Gastrocnemius medialis (tissue), 4 donors: ENCODE measurements at regions of chr13 and their contacts with region 1.

Region 1: DNA sequence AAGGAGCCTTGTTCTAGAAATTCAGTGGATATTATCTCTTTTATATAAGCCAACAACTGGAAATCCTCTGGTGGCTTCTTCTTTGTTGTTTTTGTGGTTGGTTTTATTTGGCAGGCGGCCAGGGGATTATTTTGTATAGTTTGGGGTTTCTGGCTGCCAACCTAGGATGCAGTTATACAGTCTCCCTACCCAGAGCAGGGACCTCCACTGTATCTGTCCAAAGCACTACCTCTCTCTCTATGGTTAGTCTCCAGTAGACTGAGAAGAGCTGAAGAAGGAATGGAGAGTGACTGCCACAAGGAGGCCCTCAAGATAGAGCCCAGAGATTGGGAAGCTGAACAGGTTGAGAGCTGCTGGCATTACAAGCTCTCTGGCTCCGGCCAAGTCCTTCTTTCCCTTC is 80.2 kb downstream of the ZAR1L start:
- DNase-seq: no peak
- ATAC-seq: no peak
- H3K4me3 ChIP-seq: no peak overlapping the region
- H3K27ac ChIP-seq: no peak overlapping the region
- H3K4me1 ChIP-seq: no peaks in the 10 kb centered on the region
- H3K27me3 ChIP-seq: no peaks in the 10 kb centered on the region
- CTCF ChIP-seq: no peak
- POLR2A ChIP-seq: no peak

Region 2: GRCh38 chr13:32262619-32263018 is 27.7 kb after region 1 on chr13:
- in situ Hi-C with region 1: no loop called
- intact Hi-C with region 1: loop called (anchors 1 kb)
- DNase-seq: no peak
- ATAC-seq: no peak
- H3K4me3 ChIP-seq: no peak overlapping the region
- H3K27ac ChIP-seq: peak overlapping the region; percentile 57 to 76 (median 64)
- H3K4me1 ChIP-seq: peaks cover 11 to 27% of the 10 kb centered on the region in 2 donors
- H3K27me3 ChIP-seq: no peaks in the 10 kb centered on the region
- CTCF ChIP-seq: no peak
- POLR2A ChIP-seq: no peak